CD4-positive, alpha-beta T cell (primary cell): ENCODE measurements at regions of chr16 and their contacts with region 1.

Region 1: GRCh38 chr16:89785523-89786155 is 30.8 kb downstream of the FANCA start:
- DNase-seq: peak in 13 of 14 experiments; percentile 21 to 84 (median 37)
- ATAC-seq: peak; percentile 77
- H3K4me3 ChIP-seq: no peak overlapping the region
- H3K4me3 Mint-ChIP-seq: peak overlapping the region; percentile 57
- H3K27ac ChIP-seq: no peak overlapping the region
- H3K27ac Mint-ChIP-seq: peak overlapping the region; percentile 69
- H3K4me1 ChIP-seq: peaks cover 37% of the 10 kb centered on the region
- H3K4me1 Mint-ChIP-seq: peaks cover 31% of the 10 kb centered on the region
- H3K27me3 ChIP-seq: no peaks in the 10 kb centered on the region
- H3K27me3 Mint-ChIP-seq: no peaks in the 10 kb centered on the region
- CTCF ChIP-seq: no peak

Region 2: GRCh38 chr16:89749647-89750046 is 36.0 kb before region 1 on chr16:
- CTCF ChIA-PET with region 1: no interaction called
- POLR2A ChIA-PET with region 1: interaction called, 3 read pairs
- intact Hi-C with region 1: loop called in 1 of 2 experiments (anchors 5 kb)
- DNase-seq: peak in 2 of 14 experiments; percentile 39 to 47
- ATAC-seq: no peak
- H3K4me3 ChIP-seq: no peak overlapping the region
- H3K4me3 Mint-ChIP-seq: no peak overlapping the region
- H3K27ac ChIP-seq: no peak overlapping the region
- H3K27ac Mint-ChIP-seq: peak overlapping the region; percentile 42
- H3K4me1 ChIP-seq: peaks cover 27% of the 10 kb centered on the region
- H3K4me1 Mint-ChIP-seq: peaks cover 7% of the 10 kb centered on the region
- H3K27me3 ChIP-seq: no peaks in the 10 kb centered on the region
- H3K27me3 Mint-ChIP-seq: no peaks in the 10 kb centered on the region
- CTCF ChIP-seq: no peak

Region 3: GRCh38 chr16:89847940-89848297 is 62.3 kb after region 1 on chr16:
- CTCF ChIA-PET with region 1: no interaction called
- POLR2A ChIA-PET with region 1: no interaction called
- intact Hi-C with region 1: no loop called
- DNase-seq: no peak
- ATAC-seq: no peak
- H3K4me3 ChIP-seq: no peak overlapping the region
- H3K4me3 Mint-ChIP-seq: no peak overlapping the region
- H3K27ac ChIP-seq: no peak overlapping the region
- H3K27ac Mint-ChIP-seq: no peak overlapping the region
- H3K4me1 ChIP-seq: peaks cover 11% of the 10 kb centered on the region
- H3K4me1 Mint-ChIP-seq: peaks cover 9% of the 10 kb centered on the region
- H3K27me3 ChIP-seq: no peaks in the 10 kb centered on the region
- H3K27me3 Mint-ChIP-seq: no peaks in the 10 kb centered on the region
- CTCF ChIP-seq: no peak